Cardiac septum (tissue), 1 donor: ENCODE measurements at regions of chr6 and their contacts with region 1.

Region 1: GRCh38 chr6:144013486-144013909 is 5.4 kb upstream of the PLAGL1 start:
- DNase-seq: peak; percentile 87

Region 2: DNA sequence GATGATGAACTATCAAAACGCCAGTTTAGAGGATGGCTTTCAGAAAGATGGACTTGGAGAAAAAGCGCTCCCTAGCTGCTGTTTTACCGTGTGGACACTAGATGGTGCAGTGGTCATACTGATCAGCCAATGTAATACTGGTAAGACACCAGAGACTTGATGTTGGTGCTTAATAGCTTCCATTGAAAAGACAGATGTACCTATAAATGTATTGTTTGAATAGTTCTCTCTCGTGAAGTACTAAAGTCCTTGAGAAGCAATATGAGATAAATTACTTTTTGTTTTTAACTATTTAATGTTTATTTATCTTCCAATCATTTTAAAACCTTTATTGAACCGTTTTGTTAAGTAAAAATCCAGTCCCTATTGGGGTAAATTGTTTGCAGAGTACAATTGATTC is 438.1 kb before region 1 on chr6:
- intact Hi-C with region 1: loop called (anchors 2 kb)
- DNase-seq: peak; percentile 66

Region 3: GRCh38 chr6:143940011-143940597 is 73.4 kb before region 1 on chr6:
- intact Hi-C with region 1: loop called (anchors 5 kb)
- DNase-seq: no peak

Region 4: GRCh38 chr6:144053601-144054000 is 40.1 kb after region 1 on chr6:
- intact Hi-C with region 1: no loop called
- DNase-seq: no peak